Ovary (tissue), 10 donors: ENCODE measurements at regions of chr6 and their contacts with region 1.

Region 1: GRCh38 chr6:56087421-56087820 is 160.0 kb downstream of the COL21A1 start:
- DNase-seq: no peak
- H3K4me3 ChIP-seq: no peak overlapping the region
- H3K27ac ChIP-seq: no peak overlapping the region
- H3K4me1 ChIP-seq: no peaks in the 10 kb centered on the region
- H3K27me3 ChIP-seq: no peaks in the 10 kb centered on the region
- CTCF ChIP-seq: no peak
- EP300 ChIP-seq: no peak
- POLR2A ChIP-seq: no peak

Region 2: GRCh38 chr6:55898342-55898741 is 189.1 kb before region 1 on chr6:
- intact Hi-C with region 1: no loop called
- DNase-seq: no peak
- H3K4me3 ChIP-seq: no peak overlapping the region
- H3K27ac ChIP-seq: no peak overlapping the region
- H3K4me1 ChIP-seq: no peaks in the 10 kb centered on the region
- H3K27me3 ChIP-seq: no peaks in the 10 kb centered on the region
- CTCF ChIP-seq: no peak
- EP300 ChIP-seq: no peak
- POLR2A ChIP-seq: no peak

Region 3: DNA sequence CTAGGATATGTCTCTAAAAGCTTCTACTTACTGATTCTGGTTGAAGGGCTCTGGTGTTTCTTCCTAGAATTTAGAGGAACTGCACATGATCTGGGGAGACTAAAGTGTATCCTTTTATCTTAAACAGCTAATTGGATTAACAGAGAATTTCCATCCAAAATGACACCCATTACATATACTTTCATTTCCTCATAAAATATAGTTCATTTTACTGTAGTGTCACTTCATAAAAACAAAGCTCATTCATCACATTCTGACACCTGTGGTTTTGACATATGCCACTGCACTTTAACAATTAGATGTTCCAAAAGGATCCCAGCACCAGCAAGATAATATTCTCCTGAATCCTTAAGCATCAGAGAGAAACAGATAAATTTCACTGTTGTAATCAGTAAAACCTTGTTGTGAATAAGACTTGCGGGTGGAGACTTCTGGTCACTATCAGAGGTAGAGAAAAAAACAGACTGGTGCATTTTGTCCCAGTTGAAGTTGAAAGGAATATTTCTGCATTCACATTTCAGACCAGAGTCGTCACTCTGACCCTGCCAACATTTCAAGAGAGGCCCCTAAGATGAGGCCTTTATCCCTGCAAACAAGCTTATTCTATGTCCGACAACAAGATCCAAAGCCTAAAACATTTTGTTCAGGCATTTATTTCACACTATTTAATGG is 36.8 kb before region 1 on chr6:
- intact Hi-C with region 1: loop called in 1 of 4 experiments (anchors 2 kb)
- DNase-seq: no peak
- H3K4me3 ChIP-seq: no peak overlapping the region
- H3K27ac ChIP-seq: no peak overlapping the region
- H3K4me1 ChIP-seq: peaks cover 2% of the 10 kb centered on the region
- H3K27me3 ChIP-seq: no peaks in the 10 kb centered on the region
- CTCF ChIP-seq: no peak
- EP300 ChIP-seq: no peak
- POLR2A ChIP-seq: no peak